A673 (cell line): ENCODE measurements at regions of chr19 and their contacts with region 1.

Region 1: DNA sequence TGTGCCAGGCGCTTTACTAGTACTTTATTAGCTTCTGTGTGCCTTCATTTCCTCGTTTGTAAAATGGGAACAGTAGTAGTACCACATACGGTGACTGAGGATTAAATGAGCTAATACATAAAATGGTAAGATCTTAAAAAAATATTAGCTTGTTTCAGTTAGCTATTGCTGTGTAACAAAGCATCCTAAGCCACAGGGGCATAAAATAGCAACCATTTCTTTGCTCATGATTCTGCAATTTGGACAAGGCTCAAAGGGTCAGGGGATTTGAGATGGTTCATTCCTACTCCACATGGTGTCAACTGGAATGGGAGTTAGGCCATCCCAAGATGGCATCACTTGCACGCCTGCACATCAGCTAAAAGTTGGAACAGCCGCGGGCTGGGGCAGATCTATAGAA is 13.3 kb downstream of the DYRK1B start:
- DNase-seq: no peak
- H3K4me3 ChIP-seq: no peak overlapping the region
- H3K27ac ChIP-seq: no peak overlapping the region
- H3K4me1 ChIP-seq: no peaks in the 10 kb centered on the region
- H3K27me3 ChIP-seq: no peaks in the 10 kb centered on the region
- CTCF ChIP-seq: no peak

Region 2: GRCh38 chr19:39805104-39805503 is 15.6 kb before region 1 on chr19:
- CTCF ChIA-PET with region 1: no interaction called
- POLR2A ChIA-PET with region 1: no interaction called
- intact Hi-C with region 1: no loop called
- DNase-seq: no peak
- H3K4me3 ChIP-seq: no peak overlapping the region
- H3K27ac ChIP-seq: no peak overlapping the region
- H3K4me1 ChIP-seq: no peaks in the 10 kb centered on the region
- H3K27me3 ChIP-seq: peaks cover 5% of the 10 kb centered on the region
- CTCF ChIP-seq: no peak

Region 3: DNA sequence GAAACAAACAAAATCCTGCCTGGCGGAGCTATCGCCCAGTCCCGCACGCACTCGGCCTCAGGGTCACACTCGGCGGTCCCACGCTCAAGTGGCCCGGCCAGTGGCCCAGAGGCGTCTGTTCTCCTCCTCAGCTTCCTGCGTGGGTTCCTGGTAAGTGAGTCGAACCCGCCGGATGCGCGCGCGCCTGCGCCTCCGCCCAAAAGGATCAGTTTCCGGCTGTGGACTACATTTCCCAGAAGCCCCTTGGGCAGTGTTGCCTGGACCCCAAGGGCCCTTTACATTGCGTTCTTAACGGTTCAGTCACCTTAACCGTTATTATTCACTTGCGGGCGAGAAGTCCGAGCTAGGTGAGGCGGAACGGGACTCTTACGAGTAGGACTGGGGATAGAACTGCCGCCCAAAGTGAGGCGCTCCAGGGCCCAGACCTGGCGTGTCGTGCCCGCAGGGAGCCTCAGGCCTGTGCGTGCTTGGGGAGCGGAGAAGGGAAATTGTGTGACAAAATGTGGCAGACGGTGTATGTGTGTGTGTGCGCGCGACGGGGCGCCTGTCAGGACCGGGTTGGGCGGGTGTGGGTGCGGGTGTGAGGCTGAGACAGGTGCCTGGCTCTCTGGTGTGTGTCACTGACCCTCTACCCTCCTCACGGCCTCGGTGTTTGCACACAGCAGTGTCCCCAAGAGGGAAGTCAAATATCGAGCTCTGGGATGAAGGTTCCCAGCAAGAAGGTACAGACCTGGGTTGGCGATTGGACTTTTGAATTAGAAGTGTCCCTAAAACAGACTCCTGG is 176.3 kb after region 1 on chr19 and contains the start of gene ZNF546:
- CTCF ChIA-PET with region 1: no interaction called
- POLR2A ChIA-PET with region 1: interaction called, 12 read pairs
- intact Hi-C with region 1: no loop called
- DNase-seq: peak; percentile 94
- H3K4me3 ChIP-seq: peak within 1 kb of the TSS; percentile 70
- H3K27ac ChIP-seq: peak within 1 kb of the TSS; percentile 85
- H3K4me1 ChIP-seq: peaks cover 9% of the 10 kb centered on the region
- H3K27me3 ChIP-seq: no peaks in the 10 kb centered on the region
- CTCF ChIP-seq: no peak
- total RNA-seq, gene ZNF546: 5.5 and 5.6 TPM in 2 replicates